Activated CD4-positive, alpha-beta memory T cell treated with anti-CD3 and anti-CD28 coated beads for 36 hours (primary cell): ENCODE measurements at regions of chr4 and their contacts with region 1.

Region 1: GRCh38 chr4:165234766-165235165 is 27.4 kb downstream of the KLHL2 start:
- DNase-seq: no peak
- H3K4me3 Mint-ChIP-seq: no peak overlapping the region
- H3K27ac Mint-ChIP-seq: no peak overlapping the region
- H3K4me1 Mint-ChIP-seq: peaks cover 19% of the 10 kb centered on the region
- H3K27me3 Mint-ChIP-seq: no peaks in the 10 kb centered on the region

Region 2: DNA sequence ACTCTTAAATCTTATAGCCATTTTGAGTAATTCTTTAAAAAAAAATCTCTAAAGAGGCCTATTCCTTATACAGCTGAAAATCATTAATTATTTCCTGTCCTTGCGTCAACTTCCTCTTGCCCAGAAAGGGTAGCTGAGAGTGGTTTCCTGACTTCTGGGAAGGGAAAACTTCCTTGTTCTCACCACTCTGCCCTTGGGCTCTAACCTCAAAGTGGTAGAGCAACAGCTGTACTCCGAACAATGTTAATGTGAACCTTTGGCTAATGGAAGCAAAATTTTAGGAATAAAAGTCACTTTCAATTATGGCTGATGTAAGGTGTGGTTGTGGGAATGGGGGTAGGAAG is 12.1 kb before region 1 on chr4:
- CTCF ChIA-PET with region 1: no interaction called
- POLR2A ChIA-PET with region 1: no interaction called
- intact Hi-C with region 1: loop called (anchors 1 kb)
- DNase-seq: no peak
- H3K4me3 Mint-ChIP-seq: no peak overlapping the region
- H3K27ac Mint-ChIP-seq: peak overlapping the region; percentile 43
- H3K4me1 Mint-ChIP-seq: peaks cover 24% of the 10 kb centered on the region
- H3K27me3 Mint-ChIP-seq: no peaks in the 10 kb centered on the region